ENCODE measurements at regions of chr17 and their contacts with region 1.

Region 1: DNA sequence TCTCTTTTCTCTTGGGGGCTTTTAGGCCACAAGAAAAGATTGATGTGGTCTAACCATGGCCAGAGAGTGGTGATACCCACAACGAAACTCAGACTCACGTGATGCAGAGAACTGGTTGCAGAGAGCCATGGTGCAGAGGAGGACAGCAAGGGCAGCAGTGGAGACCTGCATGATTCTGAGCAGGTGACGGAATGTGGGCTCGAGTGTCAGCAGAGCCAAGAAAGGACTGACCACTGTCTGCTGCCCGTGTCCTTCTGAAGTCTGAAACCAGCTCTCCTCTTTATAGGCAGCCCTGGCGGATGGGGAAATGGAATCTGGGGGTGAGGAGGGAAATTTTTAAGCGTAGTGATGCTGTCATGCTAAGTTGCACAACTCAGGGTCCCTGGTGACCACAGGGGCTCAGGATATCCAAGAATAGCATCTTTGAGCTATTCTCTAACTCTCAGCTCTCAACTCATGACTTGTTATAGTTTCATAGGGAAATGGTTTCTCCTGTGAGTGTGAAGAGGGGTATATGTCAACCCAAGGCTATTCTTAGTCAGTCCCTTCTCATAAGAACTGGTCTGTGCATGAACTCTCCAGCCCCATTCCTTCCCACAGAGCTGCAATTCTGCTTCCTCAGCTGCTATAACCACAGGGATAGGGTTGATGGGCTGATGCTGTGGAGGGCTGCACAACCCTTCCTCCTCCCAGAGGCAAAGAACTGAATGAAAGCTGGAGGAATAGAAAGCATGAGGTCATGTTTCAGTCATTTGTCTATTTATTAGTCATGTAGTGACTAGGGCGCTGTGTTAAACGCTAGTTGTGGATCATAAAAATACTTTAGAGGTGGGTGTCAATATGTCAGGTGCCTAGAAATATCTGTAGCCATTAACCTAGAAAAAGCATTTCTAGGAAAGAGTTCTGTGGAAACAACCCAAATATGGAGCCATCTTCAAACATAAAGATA is at the start of gene CCL3:
- DNase-seq: peak; percentile 80
- ATAC-seq: peak; percentile 70
- H3K4me3 Mint-ChIP-seq: peak within 1 kb of the TSS; percentile 70
- H3K27ac Mint-ChIP-seq: peak within 1 kb of the TSS; percentile 95
- H3K4me1 Mint-ChIP-seq: peaks cover 66% of the 10 kb centered on the region
- H3K27me3 Mint-ChIP-seq: peaks cover 6% of the 10 kb centered on the region
- CTCF ChIP-seq: no peak
- total RNA-seq, gene CCL3: 230 to 253 TPM

Region 2: DNA sequence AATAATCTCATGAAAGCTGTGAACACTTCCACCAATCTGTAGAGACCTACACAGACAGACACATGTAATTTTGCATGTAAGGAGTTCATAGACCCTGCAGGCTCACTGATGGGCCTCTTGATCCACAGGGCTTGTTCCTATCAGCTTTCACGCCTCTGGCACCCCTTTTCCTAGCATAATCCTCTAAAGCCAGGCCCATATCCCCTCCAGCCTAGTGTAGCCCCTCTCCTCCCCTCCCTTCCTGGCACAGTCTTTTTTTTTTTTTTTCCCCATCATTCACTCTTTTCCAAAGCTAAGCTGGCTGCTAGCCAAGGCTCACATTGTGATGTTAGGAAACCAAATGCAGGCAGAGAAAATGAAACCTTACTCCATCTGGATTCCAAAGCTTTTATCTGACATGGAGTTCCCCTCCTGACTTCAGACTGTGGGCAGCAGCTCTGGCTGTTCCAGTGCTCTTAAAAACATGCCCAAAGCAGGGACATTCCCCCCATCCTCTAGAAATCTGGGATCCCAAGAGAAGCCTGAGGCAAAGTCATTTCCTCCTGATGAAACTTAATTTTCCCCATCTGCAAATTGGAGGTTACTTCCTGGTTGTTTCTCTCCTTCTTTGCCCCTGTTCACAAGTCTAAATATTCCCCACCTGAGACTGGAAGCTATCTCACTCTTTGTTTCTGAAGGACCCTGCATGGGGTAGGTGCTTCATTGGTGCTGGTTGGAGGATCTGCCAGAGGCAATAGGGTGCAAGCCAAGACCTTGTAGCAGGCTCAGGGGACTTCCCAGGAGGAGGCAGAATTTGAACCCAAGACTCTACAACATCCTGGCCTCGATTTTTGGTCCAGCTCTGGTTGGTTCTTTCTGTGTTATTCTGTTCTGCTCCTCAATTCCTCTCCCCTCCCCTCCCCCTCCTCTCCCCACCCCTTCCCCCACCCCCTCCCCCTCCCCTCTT is 200.1 kb before region 1 on chr17:
- CTCF ChIA-PET with region 1: no interaction called
- POLR2A ChIA-PET with region 1: no interaction called
- intact Hi-C with region 1: loop called (anchors 10 kb)
- DNase-seq: no peak
- ATAC-seq: no peak
- H3K4me3 Mint-ChIP-seq: no peak overlapping the region
- H3K27ac Mint-ChIP-seq: peak overlapping the region; percentile 77
- H3K4me1 Mint-ChIP-seq: peaks cover 62% of the 10 kb centered on the region
- H3K27me3 Mint-ChIP-seq: no peaks in the 10 kb centered on the region
- CTCF ChIP-seq: no peak

Region 3: GRCh38 chr17:36105781-36106492 is 15.8 kb after region 1 on chr17:
- CTCF ChIA-PET with region 1: no interaction called
- POLR2A ChIA-PET with region 1: interaction called, 64 read pairs
- intact Hi-C with region 1: no loop called
- DNase-seq: no peak
- ATAC-seq: no peak
- H3K4me3 Mint-ChIP-seq: peak overlapping the region; percentile 75
- H3K27ac Mint-ChIP-seq: peak overlapping the region; percentile 88
- H3K4me1 Mint-ChIP-seq: peaks cover 33% of the 10 kb centered on the region
- H3K27me3 Mint-ChIP-seq: peaks cover 8% of the 10 kb centered on the region
- CTCF ChIP-seq: no peak

Region 4: GRCh38 chr17:36183001-36183971 is 93.1 kb after region 1 on chr17:
- CTCF ChIA-PET with region 1: no interaction called
- POLR2A ChIA-PET with region 1: no interaction called
- intact Hi-C with region 1: no loop called
- DNase-seq: no peak
- ATAC-seq: peak; percentile 38
- H3K4me3 Mint-ChIP-seq: peak overlapping the region; percentile 67
- H3K27ac Mint-ChIP-seq: peak overlapping the region; percentile 84
- H3K4me1 Mint-ChIP-seq: peaks cover 14% of the 10 kb centered on the region
- H3K27me3 Mint-ChIP-seq: peaks cover 19% of the 10 kb centered on the region
- CTCF ChIP-seq: no peak

Region 5: DNA sequence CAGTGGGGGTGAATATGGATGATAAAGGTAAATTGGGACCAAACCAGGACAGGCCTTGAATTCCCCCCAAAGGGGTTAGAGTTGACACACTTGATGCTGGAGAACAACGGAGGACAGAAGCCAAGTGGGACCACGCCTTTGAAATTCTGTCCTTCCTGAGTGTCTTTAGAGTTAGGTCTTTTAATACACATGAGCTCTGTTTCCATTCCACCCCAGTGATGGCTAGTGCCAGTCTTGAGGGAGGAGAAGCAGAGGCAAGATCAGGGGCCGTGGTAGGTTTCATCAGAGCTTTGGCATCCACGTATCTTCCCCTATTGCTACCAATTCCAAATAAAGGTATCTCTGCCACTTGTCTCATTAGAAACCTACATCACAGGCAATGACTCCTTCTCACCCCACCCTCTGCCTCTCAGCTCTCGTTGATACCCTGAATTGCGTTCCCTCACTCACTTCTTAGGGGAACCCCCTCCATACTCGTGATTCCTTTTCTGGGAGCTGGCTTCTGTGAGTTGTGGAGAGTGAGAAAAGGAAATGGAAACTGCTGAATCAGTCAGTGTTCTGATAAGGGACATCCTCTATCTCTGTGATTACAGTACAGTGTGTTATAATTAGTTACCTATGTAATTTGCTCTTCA is 108.8 kb after region 1 on chr17:
- CTCF ChIA-PET with region 1: no interaction called
- POLR2A ChIA-PET with region 1: no interaction called
- intact Hi-C with region 1: loop called (anchors 10 kb)
- DNase-seq: peak; percentile 78
- ATAC-seq: peak; percentile 86
- H3K4me3 Mint-ChIP-seq: peak overlapping the region; percentile 4
- H3K27ac Mint-ChIP-seq: peak overlapping the region; percentile 84
- H3K4me1 Mint-ChIP-seq: peaks cover 57% of the 10 kb centered on the region
- H3K27me3 Mint-ChIP-seq: peaks cover 9% of the 10 kb centered on the region
- CTCF ChIP-seq: no peak

Measured in activated CD8-positive, alpha-beta T cell treated with anti-CD3 and anti-CD28 coated beads for 36 hours (primary cell).